CD4-positive, alpha-beta T cell (primary cell): ENCODE measurements at regions of chrX and their contacts with region 1.

Region 1: DNA sequence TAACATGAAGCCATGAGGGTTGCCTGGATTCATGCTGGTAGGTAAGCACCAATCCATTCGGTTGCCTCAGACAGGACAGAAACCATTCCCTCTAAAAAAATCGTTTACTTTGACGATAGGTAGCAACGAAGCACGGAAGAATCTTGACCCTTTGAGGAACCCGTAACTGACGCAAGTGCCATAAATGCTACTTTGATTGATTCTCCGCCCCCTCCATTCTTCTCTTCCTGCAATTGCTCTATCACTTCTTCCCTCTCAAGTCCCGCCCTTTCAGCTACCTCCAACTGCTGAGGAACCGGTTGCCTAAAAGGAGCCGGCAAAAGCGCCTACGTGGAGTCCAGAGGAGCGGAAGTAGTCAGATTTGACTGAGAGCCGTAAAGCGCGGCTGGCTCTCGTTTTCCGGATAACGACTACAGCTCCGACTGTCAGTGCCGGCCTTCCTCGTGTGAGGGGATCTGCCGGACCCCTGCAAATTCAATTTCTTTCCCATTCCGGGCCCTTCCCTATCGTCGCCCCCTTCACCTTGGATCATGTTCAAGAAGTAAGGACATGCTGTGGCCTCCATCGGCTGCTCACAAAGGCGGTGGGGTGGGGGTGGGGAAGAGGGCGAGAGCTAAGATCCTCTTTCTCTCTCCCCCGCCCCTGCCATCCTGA is at the start of gene MCTS1:
- DNase-seq: peak; percentile 56 to 94 (median 66)
- ATAC-seq: peak; percentile 86
- H3K4me3 ChIP-seq: peak within 1 kb of the TSS; percentile 88
- H3K4me3 Mint-ChIP-seq: peak within 1 kb of the TSS; percentile 96
- H3K27ac ChIP-seq: peak within 1 kb of the TSS; percentile 77 to 90
- H3K27ac Mint-ChIP-seq: peak within 1 kb of the TSS; percentile 97
- H3K4me1 ChIP-seq: peaks cover 4% of the 10 kb centered on the region
- H3K4me1 Mint-ChIP-seq: peaks cover 12% of the 10 kb centered on the region
- H3K27me3 ChIP-seq: no peaks in the 10 kb centered on the region
- H3K27me3 Mint-ChIP-seq: no peaks in the 10 kb centered on the region
- CTCF ChIP-seq: no peak
- total RNA-seq, gene MCTS1: 10.1 to 10.9 TPM

Region 2: GRCh38 chrX:120560842-120561633 is 42.8 kb before region 1 on chrX and contains the start of gene CUL4B:
- CTCF ChIA-PET with region 1: interaction called, 4 read pairs
- POLR2A ChIA-PET with region 1: interaction called, 199 read pairs
- intact Hi-C with region 1: loop called (anchors 1 to 2 kb)
- DNase-seq: peak; percentile 81 to 96 (median 88)
- ATAC-seq: peak; percentile 85
- H3K4me3 ChIP-seq: peak within 1 kb of the TSS; percentile 84
- H3K4me3 Mint-ChIP-seq: peak within 1 kb of the TSS; percentile 97
- H3K27ac ChIP-seq: peak within 1 kb of the TSS; percentile 95 to 97
- H3K27ac Mint-ChIP-seq: peak within 1 kb of the TSS; percentile 90
- H3K4me1 ChIP-seq: peaks cover 9% of the 10 kb centered on the region
- H3K4me1 Mint-ChIP-seq: peaks cover 32% of the 10 kb centered on the region
- H3K27me3 ChIP-seq: no peaks in the 10 kb centered on the region
- H3K27me3 Mint-ChIP-seq: no peaks in the 10 kb centered on the region
- CTCF ChIP-seq: no peak
- total RNA-seq, gene CUL4B: 32.1 to 34.1 TPM

Region 3: DNA sequence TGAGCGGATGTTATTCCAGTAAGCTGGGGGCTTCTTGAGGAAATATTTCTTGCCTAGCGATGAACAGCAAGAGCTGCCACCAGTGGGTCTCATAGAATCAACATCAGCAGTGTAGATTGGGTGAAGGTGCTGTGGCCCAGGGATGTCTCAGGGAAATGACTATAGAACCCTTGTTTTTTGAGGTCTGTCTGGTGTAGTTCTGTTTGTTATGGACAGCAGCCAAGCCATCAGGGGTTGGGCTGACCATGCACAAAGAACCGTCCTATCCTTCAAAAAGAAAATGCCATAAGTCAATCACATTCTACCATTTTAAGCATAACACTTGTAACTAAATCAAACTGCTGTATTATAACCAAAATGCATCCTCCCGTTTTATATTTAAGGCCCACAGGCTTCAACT is 43.3 kb after region 1 on chrX:
- CTCF ChIA-PET with region 1: no interaction called
- POLR2A ChIA-PET with region 1: no interaction called
- intact Hi-C with region 1: no loop called
- DNase-seq: no peak
- ATAC-seq: no peak
- H3K4me3 ChIP-seq: no peak overlapping the region
- H3K4me3 Mint-ChIP-seq: no peak overlapping the region
- H3K27ac ChIP-seq: no peak overlapping the region
- H3K27ac Mint-ChIP-seq: no peak overlapping the region
- H3K4me1 ChIP-seq: no peaks in the 10 kb centered on the region
- H3K4me1 Mint-ChIP-seq: no peaks in the 10 kb centered on the region
- H3K27me3 ChIP-seq: no peaks in the 10 kb centered on the region
- H3K27me3 Mint-ChIP-seq: no peaks in the 10 kb centered on the region
- CTCF ChIP-seq: no peak